Mucosa of descending colon (tissue), 3 donors: ENCODE measurements at regions of chr11 and their contacts with region 1.

Region 1: DNA sequence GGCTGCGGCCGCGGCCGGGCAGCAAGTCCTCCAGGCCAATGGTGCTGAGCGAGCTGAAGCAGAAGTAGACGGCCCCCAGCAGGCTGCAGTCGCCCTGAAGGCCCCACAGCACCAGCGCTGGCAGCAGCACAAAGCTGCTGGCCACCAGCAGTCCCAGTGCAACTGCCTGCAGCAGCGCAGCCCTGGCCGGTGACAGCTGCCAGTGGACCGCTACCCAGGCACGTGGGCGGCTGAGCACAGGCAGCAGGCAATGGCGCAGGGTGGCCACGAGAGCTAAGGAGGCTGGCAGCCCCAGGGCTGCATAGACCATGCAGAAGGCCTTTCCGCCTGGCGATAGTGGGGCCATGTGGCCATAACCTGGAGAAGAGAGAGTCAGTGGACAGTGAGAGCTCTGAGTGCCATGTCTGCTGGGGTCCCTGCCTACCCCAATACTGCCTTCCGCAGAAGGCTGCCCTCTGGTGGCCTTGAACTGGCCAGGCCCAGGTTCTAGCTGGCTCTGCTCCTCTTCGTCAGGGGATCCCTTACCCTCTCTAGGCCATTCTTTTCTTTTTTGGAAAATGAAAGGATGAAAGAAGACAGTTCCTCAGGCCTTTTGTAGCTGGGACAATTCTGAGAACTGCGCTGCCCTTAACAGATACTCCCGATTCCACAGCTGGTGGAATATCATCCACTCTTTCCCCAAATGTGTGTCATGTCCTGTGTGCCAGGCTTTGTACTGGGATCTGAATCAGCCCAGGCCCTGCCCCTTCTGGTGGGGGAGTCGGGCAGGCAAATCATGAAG is 1.9 kb downstream of the KCNK7 start:
- DNase-seq: peak in 2 of 3 donors; percentile 57 to 64
- ATAC-seq: no peak
- H3K4me3 ChIP-seq: no peak overlapping the region
- H3K4me1 ChIP-seq: peaks cover 21% of the 10 kb centered on the region
- CTCF ChIP-seq: no peak

Region 2: GRCh38 chr11:65539560-65540296 is 54.0 kb before region 1 on chr11:
- intact Hi-C with region 1: loop called in 1 of 2 experiments (anchors 10 kb)
- DNase-seq: peak; percentile 86 to 92 (median 90)
- ATAC-seq: peak; percentile 75
- H3K4me3 ChIP-seq: peak overlapping the region; percentile 30
- H3K4me1 ChIP-seq: peaks cover 17% of the 10 kb centered on the region
- CTCF ChIP-seq: peak; percentile 26

Region 3: DNA sequence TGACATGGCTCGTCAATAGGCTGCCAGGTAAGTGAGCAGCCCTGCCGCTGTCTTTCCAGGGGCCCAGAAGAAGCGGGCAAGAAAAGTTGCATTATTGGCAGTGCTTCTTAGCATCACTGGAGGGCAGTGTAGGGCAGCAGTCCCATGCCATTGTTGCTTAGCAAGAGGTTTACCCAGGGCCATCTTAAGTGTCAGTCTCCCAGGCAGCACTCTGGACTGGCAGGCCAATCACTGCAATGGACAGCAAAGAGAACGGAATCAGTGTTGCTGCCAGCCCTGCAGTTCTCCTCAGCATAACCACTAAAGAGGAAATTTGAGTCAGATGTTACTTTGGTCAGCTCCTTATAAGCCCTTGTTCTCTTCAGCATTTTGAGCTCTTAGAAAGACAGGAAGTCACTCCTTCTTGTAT is 1659.1 kb after region 1 on chr11:
- intact Hi-C with region 1: no loop called
- DNase-seq: no peak
- ATAC-seq: peak; percentile 69
- H3K4me3 ChIP-seq: no peak overlapping the region
- H3K4me1 ChIP-seq: peaks cover 12% of the 10 kb centered on the region
- CTCF ChIP-seq: no peak